Adrenal gland (tissue), 19 donors: ENCODE measurements at regions of chr4 and their contacts with region 1.

Region 1: DNA sequence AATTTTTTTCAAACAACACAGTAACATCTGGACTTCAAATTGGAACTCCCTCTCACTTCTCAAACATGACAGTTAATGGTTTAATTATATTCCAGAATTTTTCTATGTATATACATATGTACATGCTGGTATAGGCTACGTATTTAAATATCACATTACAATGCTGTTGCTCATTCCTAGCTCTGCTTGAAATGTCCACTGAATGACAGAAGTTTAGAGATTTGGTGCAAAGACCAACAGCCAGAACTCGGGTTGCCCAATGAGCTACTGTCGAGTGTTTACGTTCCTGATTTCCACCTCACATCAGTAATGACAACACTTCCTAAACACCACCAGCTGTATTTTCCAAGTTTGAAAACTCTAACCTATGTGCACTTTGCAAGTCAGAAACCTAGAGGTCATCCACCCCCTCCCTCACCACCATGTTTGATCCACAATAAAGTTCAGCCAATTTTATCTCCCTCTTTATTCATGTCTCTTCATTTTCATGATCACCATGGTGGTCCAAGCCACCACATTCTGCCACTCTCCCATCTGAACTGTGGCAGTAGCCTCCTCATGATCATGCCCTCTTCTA is 49.3 kb upstream of the RPL34 start:
- DNase-seq: no peak
- H3K4me3 ChIP-seq: no peak overlapping the region
- H3K27ac ChIP-seq: no peak overlapping the region
- H3K4me1 ChIP-seq: no peaks in the 10 kb centered on the region
- H3K27me3 ChIP-seq: no peaks in the 10 kb centered on the region
- CTCF ChIP-seq: no peak
- POLR2A ChIP-seq: no peak

Region 2: DNA sequence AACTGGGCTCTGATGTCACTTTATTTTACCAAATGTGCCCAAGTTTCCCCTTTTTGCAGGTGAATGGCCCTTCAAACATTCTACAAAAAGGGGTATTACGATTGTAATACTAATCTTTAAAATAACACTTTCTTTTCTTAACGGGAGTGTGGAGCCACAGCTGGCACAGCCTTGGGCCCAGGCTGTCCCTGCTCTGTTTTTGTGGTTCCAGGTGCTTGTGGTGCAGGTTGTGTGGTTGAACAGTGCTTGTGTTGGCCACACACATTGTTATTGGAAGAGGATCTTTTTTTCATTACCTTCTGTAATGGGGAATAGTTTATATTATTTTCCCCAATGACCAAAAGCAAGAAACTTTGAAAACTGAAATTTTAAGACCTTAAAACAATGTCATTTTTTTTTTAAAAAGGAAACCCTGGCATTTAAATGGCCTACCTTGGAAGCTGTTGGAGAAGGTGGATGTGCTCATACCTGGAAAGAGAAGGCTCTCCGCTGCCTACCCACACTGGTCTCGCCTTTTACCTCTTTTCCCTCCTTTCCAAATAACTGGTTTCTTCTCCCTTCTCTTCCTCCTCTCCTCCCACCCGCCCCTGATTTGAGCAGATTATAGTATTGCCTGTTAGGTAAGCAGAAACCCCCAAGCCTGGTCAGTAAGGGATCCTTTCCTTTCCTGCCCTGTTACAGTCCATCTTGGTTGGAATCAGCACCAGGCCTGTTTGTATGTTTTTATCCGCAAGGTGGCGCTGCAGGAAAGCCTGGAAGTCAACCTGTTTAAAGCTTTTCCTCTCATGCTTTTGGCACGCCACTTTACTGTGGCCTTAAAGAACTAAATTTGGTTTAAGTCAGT is 552.8 kb before region 1 on chr4:
- intact Hi-C with region 1: loop called in 1 of 2 experiments (anchors 10 kb)
- DNase-seq: peak; percentile 78 to 96 (median 84)
- H3K4me3 ChIP-seq: no peak overlapping the region
- H3K27ac ChIP-seq: no peak overlapping the region
- H3K4me1 ChIP-seq: no peaks in the 10 kb centered on the region
- H3K27me3 ChIP-seq: no peaks in the 10 kb centered on the region
- CTCF ChIP-seq: peak; percentile 76 to 91 (median 80)
- POLR2A ChIP-seq: no peak

Region 3: GRCh38 chr4:108053251-108053711 is 517.8 kb before region 1 on chr4:
- intact Hi-C with region 1: loop called in 1 of 2 experiments (anchors 10 kb)
- DNase-seq: no peak
- H3K4me3 ChIP-seq: no peak overlapping the region
- H3K27ac ChIP-seq: no peak overlapping the region
- H3K4me1 ChIP-seq: no peaks in the 10 kb centered on the region
- H3K27me3 ChIP-seq: no peaks in the 10 kb centered on the region
- CTCF ChIP-seq: no peak
- POLR2A ChIP-seq: no peak

Region 4: DNA sequence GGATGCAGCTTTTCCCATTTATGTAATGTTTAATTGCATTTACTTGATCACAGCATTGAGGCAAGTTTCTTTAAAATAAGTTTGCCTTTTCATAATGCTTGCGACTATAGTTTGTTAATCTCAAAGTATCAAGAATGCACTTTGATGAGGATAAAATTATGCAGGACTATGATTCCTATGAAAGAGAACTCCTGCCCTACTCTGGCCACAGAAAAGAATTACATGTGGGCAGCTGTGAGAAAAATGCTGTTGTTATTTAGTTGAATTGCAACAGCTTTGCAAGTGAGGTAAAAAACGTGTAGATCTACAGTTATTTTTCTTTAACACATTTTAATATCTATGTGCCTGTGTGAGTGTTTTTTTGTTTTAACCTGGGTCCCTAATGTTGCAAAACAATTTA is 66.8 kb after region 1 on chr4:
- intact Hi-C with region 1: no loop called
- DNase-seq: no peak
- H3K4me3 ChIP-seq: no peak overlapping the region
- H3K27ac ChIP-seq: no peak overlapping the region
- H3K4me1 ChIP-seq: no peaks in the 10 kb centered on the region
- H3K27me3 ChIP-seq: no peaks in the 10 kb centered on the region
- CTCF ChIP-seq: no peak
- POLR2A ChIP-seq: no peak